Panc1 (cell line): ENCODE measurements at regions of chr1 and their contacts with region 1.

Region 1: DNA sequence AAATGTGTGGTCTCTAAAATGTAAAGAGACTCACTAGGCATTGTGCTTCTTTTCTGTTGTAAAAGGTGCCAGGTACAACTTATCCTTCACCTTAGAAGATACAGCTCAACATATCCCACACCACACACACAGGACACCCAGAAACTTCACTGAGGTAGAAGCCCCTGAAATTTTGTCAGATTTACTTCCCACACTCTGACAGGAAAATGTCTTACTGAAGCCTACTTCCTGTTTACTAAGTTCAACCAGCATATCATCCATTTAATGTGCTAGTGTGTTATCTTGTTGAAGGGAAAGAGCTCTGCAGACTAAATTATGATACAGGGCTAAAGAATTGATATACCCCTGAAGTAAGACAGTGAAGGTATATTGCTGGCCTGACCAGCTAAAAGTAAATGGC is 39.9 kb upstream of the INSL5 start:
- DNase-seq: no peak
- ATAC-seq: no peak
- H3K4me3 ChIP-seq: no peak overlapping the region
- H3K27ac ChIP-seq: no peak overlapping the region
- H3K4me1 ChIP-seq: no peaks in the 10 kb centered on the region
- H3K27me3 ChIP-seq: no peaks in the 10 kb centered on the region
- CTCF ChIP-seq: no peak

Region 2: DNA sequence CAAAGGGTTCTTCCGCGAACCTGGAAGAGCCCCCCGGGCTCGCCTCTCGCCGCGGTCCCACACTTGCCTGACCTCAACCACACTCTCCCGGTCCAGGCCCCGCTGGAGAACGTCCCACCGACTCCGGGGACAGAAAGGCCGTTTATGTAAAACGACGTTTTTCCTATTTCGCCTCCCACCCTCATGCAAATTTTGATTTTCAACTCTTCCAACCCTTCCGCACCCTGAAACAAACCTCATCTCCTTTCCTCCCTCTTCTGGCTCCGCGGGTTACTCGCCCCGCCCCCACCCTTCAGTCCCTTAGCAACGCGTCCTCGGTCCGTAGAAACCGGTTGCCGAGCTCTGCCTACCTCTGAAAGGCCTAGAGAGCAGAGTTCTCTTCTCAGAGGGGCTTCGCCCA is 293.8 kb after region 1 on chr1 and contains the start of gene C1orf141:
- CTCF ChIA-PET with region 1: no interaction called
- POLR2A ChIA-PET with region 1: interaction called, 13 read pairs
- in situ Hi-C with region 1: no loop called
- intact Hi-C with region 1: no loop called
- DNase-seq: no peak
- ATAC-seq: no peak
- H3K4me3 ChIP-seq: no peak within 1 kb of the TSS
- H3K27ac ChIP-seq: no peak within 1 kb of the TSS
- H3K4me1 ChIP-seq: no peaks in the 10 kb centered on the region
- H3K27me3 ChIP-seq: no peaks in the 10 kb centered on the region
- CTCF ChIP-seq: no peak
- total RNA-seq, gene C1orf141: not detected